ENCODE measurements at regions of chr7 and their contacts with region 1.

Region 1: DNA sequence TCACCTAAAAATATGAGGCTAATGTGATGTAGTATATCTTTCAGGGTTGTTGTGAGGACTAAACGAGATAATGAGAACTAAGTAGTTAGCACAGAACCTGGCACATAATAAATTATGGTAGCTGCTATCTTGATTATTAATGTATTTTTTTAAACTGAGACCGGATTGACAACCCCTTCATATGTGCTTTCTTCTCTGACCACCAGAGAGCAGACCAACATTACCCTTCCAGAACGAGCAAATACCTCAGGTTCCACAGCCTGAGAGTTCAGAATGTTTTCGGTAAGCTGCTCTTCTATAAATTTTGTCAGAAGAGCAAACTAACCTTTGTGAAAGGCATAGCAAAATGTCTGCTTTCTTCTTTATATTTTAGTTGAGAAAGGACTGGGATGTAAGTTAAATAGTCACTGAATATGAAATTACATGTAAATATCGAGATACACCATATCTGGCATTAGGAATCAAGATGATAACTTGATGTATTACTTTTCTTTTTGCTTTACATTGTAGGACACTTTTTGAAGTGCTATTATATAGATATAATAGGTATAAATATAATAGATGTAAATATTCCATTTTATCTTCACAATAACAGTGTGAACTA is 13.6 kb upstream of the BPGM start:
- DNase-seq: peak; percentile 51
- ATAC-seq: peak; percentile 91
- H3K4me3 ChIP-seq: no peak overlapping the region
- H3K27ac ChIP-seq: no peak overlapping the region
- H3K4me1 ChIP-seq: no peaks in the 10 kb centered on the region
- H3K27me3 ChIP-seq: 0 out of 2 replicates have a peak, but pooled peaks cover 4% of the 10 kb centered on the region
- CTCF ChIP-seq: peak; percentile 63 to 76 (median 75); a peak in 5 of 6 replicates
- POLR2A ChIP-seq: no peak
- RAD21 ChIP-seq: peak; percentile 86

Region 2: GRCh38 chr7:134126966-134127848 is 505.8 kb before region 1 on chr7 and contains the start of gene LRGUK:
- CTCF ChIA-PET with region 1: no interaction called
- POLR2A ChIA-PET with region 1: no interaction called
- RAD21 ChIA-PET with region 1: no interaction called
- intact Hi-C with region 1: no loop called
- DNase-seq: no peak
- ATAC-seq: peak; percentile 98
- H3K4me3 ChIP-seq: peak within 1 kb of the TSS; percentile 36 to 45
- H3K27ac ChIP-seq: no peak within 1 kb of the TSS
- H3K4me1 ChIP-seq: no peaks in the 10 kb centered on the region
- H3K27me3 ChIP-seq: no peaks in the 10 kb centered on the region
- CTCF ChIP-seq: no peak
- POLR2A ChIP-seq: no peak
- RAD21 ChIP-seq: no peak
- total RNA-seq, gene LRGUK: 0.49 TPM

Region 3: DNA sequence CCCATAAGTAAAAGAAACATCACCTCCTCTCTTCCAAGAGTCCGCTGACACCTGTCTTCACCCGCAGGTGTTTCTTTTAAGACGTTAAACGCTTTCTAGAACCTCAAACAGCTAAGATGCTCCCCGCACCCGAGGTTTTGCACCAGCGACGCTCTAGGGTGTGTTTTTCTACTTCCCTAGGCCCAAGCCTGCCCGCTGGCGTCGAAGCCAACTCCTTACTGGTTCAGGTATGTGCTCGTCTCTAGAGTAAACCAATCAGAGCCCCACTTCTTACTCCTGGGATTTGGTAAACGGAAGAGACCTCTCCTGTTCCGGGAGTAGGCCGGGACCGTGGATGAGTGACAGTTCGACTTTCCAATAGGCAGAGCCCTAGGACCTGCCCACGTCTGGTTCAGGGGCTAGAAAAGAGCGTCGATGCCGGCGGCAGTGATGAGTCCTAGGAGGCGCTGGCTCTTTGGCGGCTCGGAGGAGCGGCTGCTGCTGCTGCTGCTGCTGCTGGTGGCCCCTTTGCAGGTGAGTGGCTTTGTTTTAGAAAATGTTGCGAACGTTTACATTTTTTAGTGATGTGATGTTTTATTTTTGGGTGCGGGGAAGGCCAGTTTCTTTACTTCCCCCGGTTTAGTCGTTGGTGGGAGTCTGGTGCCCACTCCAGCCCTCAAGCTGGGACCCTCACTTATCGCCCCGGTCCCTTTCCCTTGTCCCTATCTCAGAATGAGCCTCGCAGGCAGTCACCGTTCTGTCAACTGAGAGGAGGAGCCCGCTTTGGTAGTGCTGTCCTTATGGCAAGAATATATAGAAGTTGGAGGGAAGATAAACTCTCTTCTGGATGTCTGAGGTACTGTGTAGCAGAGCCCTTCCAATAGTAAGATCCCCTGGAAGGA is 13.6 kb after region 1 on chr7 and contains the start of gene BPGM:
- CTCF ChIA-PET with region 1: interaction called, 17 read pairs
- POLR2A ChIA-PET with region 1: interaction called, 7 read pairs
- RAD21 ChIA-PET with region 1: no interaction called
- intact Hi-C with region 1: no loop called
- DNase-seq: peak; percentile 100
- ATAC-seq: peak; percentile 99
- H3K4me3 ChIP-seq: peak within 1 kb of the TSS; percentile 63 to 87
- H3K27ac ChIP-seq: 0 out of 2 replicates have a peak within 1 kb of the TSS, but pooled peaks have one; percentile 19
- H3K4me1 ChIP-seq: peaks cover 3 to 12% of the 10 kb centered on the region in 2 experiments; a peak in 2 of 4 replicates
- H3K27me3 ChIP-seq: no peaks in the 10 kb centered on the region
- CTCF ChIP-seq: peak in 2 of 3 experiments; percentile 4 to 39; a peak in 2 of 6 replicates
- POLR2A ChIP-seq: peak; percentile 89
- RAD21 ChIP-seq: no peak
- total RNA-seq, gene BPGM: 10.0 TPM

Region 4: DNA sequence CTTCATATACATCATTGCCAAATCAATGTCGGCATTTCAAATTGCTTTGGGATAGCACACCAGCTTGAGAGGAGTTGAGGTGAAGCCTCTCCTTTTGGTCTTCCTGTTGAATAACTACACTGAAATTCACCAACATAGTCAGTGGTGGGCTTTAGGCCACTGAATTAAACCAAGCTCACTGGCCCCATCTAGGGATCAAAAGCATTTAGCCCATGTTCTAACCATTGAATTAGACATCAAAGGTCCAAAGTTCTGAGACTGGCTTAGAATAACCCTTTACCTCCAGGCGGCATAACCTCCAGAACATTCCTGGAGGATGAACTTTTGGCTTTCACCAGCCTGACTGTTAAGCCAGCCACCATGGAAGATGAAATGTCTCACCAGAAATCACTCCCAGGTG is 68.2 kb after region 1 on chr7:
- CTCF ChIA-PET with region 1: interaction called, 15 read pairs
- POLR2A ChIA-PET with region 1: no interaction called
- RAD21 ChIA-PET with region 1: interaction called in 1 of 2 experiments, 3 read pairs
- intact Hi-C with region 1: loop called (anchors 1 kb)
- DNase-seq: no peak
- ATAC-seq: peak; percentile 79
- H3K4me3 ChIP-seq: no peak overlapping the region
- H3K27ac ChIP-seq: no peak overlapping the region
- H3K4me1 ChIP-seq: no peaks in the 10 kb centered on the region
- H3K27me3 ChIP-seq: no peaks in the 10 kb centered on the region; the same call in 1 of the 2 replicates
- CTCF ChIP-seq: peak; percentile 38 to 53 (median 47); a peak in 5 of 6 replicates
- POLR2A ChIP-seq: no peak
- RAD21 ChIP-seq: peak; percentile 56

Region 5: DNA sequence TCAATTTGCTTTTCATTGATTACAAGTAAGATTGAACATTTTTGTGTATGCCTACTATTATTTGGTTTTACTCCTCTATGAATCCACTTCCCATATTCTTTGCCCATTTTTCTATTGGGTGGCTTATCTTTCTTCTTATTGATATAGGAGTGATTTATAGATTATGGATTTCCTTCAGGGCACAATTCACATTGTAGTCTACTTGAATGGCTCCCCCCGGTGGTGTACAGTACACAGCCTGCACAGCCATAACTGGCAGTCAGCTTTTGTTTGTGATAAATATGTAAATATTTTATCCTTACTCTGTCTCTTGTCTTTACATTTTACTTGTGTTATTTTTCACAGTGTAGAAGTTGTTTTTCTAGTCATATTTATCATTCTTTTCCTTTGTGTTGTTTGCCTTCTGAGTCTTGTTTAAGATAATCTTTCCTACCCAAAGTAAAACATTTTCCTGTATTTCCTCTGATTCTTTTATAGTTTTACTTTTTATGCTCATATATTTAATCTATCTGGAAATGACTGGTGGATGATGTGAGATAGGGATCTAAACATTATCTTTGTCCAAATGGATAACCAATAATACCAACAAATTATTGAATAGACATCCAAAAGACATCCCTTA is 122.5 kb after region 1 on chr7:
- CTCF ChIA-PET with region 1: interaction called, 4 read pairs
- POLR2A ChIA-PET with region 1: no interaction called
- RAD21 ChIA-PET with region 1: no interaction called
- intact Hi-C with region 1: loop called (anchors 1 kb)
- DNase-seq: no peak
- ATAC-seq: peak; percentile 79
- H3K4me3 ChIP-seq: no peak overlapping the region
- H3K27ac ChIP-seq: no peak overlapping the region
- H3K4me1 ChIP-seq: no peaks in the 10 kb centered on the region
- H3K27me3 ChIP-seq: no peaks in the 10 kb centered on the region
- CTCF ChIP-seq: peak; percentile 43 to 71 (median 67); a peak in 5 of 6 replicates
- POLR2A ChIP-seq: no peak
- RAD21 ChIP-seq: peak; percentile 42; the same call in 1 of the 2 replicates

Region 6: DNA sequence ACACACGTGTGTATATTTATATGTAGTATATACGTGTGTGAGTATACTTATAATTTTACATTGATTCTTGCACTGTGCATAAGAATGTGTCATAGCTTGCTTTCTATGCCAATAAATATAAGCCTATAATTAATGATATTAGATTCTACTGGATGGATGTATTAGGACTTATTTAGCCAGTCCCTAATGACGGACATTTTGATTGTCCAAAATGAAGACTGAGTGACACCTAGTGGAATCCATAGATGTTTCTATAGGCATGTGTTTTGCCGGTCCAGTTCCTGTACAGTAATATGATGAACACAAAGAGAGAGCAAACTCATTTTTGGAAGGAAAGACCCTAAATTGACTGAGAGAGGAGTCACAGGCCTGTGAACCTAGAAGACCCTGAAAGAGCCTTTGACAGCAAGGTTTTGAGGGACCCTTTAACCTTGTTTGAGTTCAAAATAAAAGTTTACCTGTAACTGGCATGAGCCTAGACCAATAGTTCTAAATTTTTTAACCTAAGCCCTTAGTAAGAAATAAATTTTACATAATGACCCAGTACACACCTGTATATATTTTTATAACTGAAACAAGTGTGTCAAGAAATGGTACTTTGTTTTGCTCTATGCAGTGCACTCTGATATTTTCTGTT is 310.8 kb after region 1 on chr7:
- CTCF ChIA-PET with region 1: interaction called, 10 read pairs
- POLR2A ChIA-PET with region 1: no interaction called
- RAD21 ChIA-PET with region 1: interaction called in 1 of 2 experiments, 3 read pairs
- intact Hi-C with region 1: loop called (anchors 1 kb)
- DNase-seq: peak; percentile 19
- ATAC-seq: peak; percentile 93
- H3K4me3 ChIP-seq: no peak overlapping the region
- H3K27ac ChIP-seq: no peak overlapping the region
- H3K4me1 ChIP-seq: no peaks in the 10 kb centered on the region
- H3K27me3 ChIP-seq: no peaks in the 10 kb centered on the region
- CTCF ChIP-seq: peak; percentile 40 to 78 (median 62); a peak in 5 of 6 replicates
- POLR2A ChIP-seq: no peak
- RAD21 ChIP-seq: peak; percentile 83

Region 7: GRCh38 chr7:134954197-134955082 is 321.4 kb after region 1 on chr7:
- CTCF ChIA-PET with region 1: interaction called, 7 read pairs
- POLR2A ChIA-PET with region 1: no interaction called
- RAD21 ChIA-PET with region 1: no interaction called
- intact Hi-C with region 1: loop called (anchors 1 kb)
- DNase-seq: peak; percentile 12
- ATAC-seq: no peak
- H3K4me3 ChIP-seq: no peak overlapping the region
- H3K27ac ChIP-seq: no peak overlapping the region
- H3K4me1 ChIP-seq: no peaks in the 10 kb centered on the region
- H3K27me3 ChIP-seq: no peaks in the 10 kb centered on the region
- CTCF ChIP-seq: peak; percentile 36 to 74 (median 66); a peak in 5 of 6 replicates
- POLR2A ChIP-seq: no peak
- RAD21 ChIP-seq: peak; percentile 77